ENCODE measurements at regions of chr6 and their contacts with region 1.

Region 1: DNA sequence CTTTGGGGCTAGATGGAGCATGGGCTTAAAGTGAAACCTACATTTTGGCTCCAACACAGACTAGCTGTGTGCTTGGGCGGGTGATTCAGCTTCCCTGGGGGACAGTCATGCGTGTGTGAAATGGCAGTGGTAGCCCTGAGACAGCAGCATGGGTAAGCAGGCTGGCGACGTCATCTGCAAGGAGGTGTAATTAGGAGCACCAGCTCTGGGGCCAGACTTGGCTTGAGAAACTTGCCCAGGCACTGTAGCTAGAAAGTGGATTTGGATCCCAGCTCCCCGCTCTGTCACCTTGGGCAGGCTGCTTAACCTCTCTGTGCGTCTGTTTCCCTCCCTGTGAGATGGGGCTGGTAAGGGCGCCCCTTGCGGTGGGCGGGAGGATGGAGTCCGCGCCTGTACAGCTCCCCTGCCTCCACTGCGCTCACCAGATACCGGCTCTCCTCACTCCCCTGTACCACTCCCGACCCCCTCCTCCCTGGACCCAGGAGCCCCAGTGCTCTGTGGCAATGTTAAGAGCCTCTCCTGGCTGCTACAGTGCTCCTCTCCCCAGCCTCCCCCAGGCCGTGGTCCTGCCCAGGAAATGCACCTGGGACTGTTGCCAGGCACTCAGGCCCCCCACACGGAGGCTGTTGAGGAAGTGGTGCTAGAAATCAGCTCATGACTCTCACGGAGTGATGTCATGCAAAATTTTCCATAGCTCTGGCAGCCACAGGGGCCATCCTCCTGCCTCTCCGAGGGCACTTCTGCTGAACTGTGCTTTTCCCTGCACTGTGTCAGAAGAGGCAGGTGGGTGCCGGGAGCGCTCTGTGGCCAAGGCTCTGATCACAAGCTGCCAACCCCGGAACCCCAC is 44.6 kb downstream of the SYNJ2 start:
- DNase-seq: peak; percentile 87
- H3K4me3 Mint-ChIP-seq: peak overlapping the region; percentile 71
- H3K27ac Mint-ChIP-seq: peak overlapping the region; percentile 98
- H3K4me1 Mint-ChIP-seq: peaks cover 53% of the 10 kb centered on the region
- H3K27me3 Mint-ChIP-seq: no peaks in the 10 kb centered on the region

Region 2: DNA sequence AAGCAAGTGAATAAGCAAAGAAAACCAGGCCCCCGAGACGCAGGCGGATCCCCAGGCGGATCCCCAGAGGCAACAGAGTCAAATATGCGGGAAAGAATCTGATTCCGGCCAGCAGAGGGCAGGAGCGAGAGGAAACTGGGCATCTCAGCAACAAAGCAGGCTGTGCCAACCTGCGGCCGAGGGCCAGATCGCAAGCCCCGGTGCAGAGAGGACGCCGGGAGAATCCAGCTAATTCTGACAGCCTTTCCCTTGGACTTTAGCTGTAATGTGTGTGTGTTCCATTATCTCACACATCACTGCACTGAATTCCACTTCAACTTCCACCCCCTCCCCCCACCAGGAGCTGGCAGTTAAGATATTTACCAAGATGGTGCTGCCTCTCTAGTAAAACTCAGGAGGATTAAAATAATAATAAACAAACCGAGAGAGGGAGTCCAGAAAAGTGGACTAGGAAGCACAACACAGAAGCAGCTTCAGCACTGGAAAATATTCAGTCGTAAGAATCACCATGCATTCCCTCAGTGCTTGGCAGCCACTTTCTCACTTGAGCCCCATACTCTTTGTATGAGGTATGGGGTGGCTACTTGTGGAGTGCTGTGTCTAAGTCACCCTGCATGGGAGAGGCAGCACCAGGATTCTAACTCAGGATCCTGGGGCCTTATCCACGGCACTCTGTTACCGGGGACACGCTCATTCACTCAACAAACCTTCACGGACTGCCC is 269.4 kb before region 1 on chr6:
- CTCF ChIA-PET with region 1: interaction called, 11 read pairs
- DNase-seq: peak; percentile 88
- H3K4me3 Mint-ChIP-seq: no peak overlapping the region
- H3K27ac Mint-ChIP-seq: no peak overlapping the region
- H3K4me1 Mint-ChIP-seq: peaks cover 74% of the 10 kb centered on the region
- H3K27me3 Mint-ChIP-seq: peaks cover 82% of the 10 kb centered on the region

Region 3: DNA sequence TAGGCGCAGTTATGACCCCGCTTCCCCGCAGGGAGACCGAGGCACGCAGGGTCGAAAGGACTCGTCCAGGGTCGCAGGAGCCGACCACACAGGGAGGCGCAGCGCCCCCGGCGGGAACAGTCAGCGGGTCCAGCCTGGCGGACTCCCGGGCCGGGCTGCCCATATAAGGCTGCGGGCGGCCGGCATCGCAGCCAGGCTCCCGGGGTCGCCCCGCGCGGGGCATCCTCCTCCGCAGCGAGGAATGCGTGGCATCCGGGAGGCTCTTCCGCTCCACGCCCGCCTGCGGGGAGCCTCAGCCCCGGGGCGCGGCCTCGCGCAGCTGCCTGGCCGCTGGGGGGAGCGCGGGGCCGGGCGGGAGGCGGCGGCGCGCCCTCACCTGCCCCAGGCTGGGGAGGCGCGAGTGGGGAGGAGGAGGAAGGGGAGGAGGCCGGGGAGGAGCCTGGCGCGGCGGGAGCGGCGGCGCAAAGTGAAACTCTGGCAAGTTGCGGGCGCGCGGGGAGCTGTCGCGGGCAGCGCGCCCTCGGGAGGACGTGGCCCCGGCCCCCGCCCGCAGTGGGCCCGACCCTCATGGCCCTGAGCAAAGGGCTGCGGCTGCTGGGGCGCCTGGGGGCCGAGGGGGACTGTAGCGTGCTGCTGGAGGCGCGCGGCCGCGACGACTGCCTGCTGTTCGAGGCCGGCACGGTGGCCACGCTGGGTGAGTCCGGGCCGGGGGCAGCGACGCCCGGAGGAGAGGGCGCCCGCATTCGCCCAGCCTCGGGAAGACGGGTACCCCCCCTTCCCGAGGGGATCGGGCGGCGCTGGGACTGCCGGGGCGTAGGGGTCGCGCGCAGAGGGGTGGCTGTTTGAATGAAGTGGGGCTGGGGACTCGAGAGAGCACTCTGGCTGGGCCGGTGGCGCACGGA is 44.6 kb before region 1 on chr6 and contains the start of gene SYNJ2:
- CTCF ChIA-PET with region 1: interaction called, 34 read pairs
- DNase-seq: peak; percentile 92
- H3K4me3 Mint-ChIP-seq: peak within 1 kb of the TSS; percentile 94
- H3K27ac Mint-ChIP-seq: peak within 1 kb of the TSS; percentile 88
- H3K4me1 Mint-ChIP-seq: peaks cover 65% of the 10 kb centered on the region
- H3K27me3 Mint-ChIP-seq: peaks cover 44% of the 10 kb centered on the region

Region 4: GRCh38 chr6:158011478-158011920 is 14.8 kb before region 1 on chr6:
- CTCF ChIA-PET with region 1: interaction called, 27 read pairs
- DNase-seq: no peak
- H3K4me3 Mint-ChIP-seq: no peak overlapping the region
- H3K27ac Mint-ChIP-seq: no peak overlapping the region
- H3K4me1 Mint-ChIP-seq: peaks cover 71% of the 10 kb centered on the region
- H3K27me3 Mint-ChIP-seq: no peaks in the 10 kb centered on the region

Region 5: DNA sequence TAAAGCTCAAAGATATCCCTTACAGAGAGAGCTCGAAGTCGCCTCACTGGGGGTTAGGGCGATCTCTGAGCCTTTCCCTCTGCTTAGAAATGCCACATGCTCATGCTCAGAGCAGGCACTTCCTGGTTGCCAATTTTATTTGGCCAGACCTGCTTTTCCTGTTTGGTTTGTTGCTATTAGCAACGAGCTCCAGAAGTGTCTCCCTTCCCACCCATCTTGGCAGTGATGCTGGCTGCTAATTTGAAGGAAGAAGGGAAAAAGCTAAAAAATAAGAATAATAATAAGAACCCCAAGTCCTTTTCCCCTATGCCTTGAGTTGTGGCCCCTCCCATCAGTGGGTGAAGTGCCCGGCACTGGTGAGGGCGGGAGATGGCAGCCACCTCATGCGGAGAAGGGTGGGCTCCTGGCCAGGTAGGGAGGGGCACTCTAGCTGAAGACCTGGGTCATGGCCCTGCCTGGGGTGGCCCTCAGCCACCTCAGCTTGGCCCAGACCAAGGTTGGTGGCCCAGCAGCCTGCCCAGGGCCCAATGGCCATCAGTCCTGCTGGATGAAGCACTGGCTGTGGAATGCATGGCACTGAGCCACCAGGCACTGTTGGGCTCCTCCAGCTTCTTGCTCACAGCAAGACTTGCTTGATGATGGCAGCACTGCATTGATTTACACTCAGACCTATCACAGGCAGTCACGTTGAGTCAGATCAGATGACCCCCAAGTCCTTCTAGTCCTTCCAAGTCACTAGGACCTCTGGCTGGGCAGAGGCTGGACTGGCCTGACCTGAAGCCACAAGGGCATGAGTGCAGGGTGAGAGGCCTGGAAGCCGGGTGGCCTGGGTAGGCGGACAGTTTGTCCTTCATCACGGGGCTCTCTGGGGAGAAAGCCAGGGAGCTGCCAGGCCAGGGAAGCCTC is 34.4 kb after region 1 on chr6:
- CTCF ChIA-PET with region 1: interaction called, 12 read pairs
- DNase-seq: no peak
- H3K4me3 Mint-ChIP-seq: no peak overlapping the region
- H3K27ac Mint-ChIP-seq: no peak overlapping the region
- H3K4me1 Mint-ChIP-seq: peaks cover 33% of the 10 kb centered on the region
- H3K27me3 Mint-ChIP-seq: no peaks in the 10 kb centered on the region

Measured in activated naive CD4-positive, alpha-beta T cell treated with anti-CD3 and anti-CD28 coated beads, Interleukin-2, amount 10 ng/mL, durations not matched to agents 7 days and 5 days (primary cell).